AG04449 (cell line): ENCODE measurements at regions of chr2 and their contacts with region 1.

Region 1: GRCh38 chr2:55168221-55169154 is 63.6 kb downstream of the CLHC1 start:
- DNase-seq: no peak
- H3K4me3 ChIP-seq: no peak overlapping the region
- CTCF ChIP-seq: peak; percentile 69

Region 2: DNA sequence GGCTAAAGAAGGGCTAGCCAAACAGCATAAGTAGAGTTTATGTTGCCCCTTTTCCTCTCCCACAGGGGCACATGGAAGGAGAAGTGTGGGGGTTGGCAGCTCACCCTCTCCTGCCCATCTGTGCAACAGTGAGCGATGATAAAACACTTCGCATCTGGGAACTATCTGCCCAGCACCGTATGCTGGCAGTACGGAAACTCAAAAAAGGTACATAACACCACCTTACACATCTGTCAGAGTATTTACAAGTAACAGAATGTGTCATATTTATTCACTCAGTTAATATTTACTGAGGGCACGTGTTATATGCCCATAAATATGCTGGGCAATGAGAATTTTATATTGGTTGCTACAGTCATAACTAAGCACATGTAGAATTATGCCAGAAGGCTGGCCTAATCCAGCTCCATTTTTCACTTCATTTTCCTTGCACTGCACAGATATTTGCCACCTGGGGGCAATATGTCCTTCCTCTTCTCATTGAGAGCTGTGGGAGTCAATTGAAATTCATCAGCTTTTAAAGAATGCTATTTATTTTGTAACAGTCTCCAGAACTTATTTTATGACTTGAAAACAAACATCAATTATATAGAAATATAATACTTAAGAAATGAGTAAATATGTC is 268.8 kb before region 1 on chr2:
- CTCF ChIA-PET with region 1: interaction called, 304 read pairs
- POLR2A ChIA-PET with region 1: no interaction called
- DNase-seq: no peak
- H3K4me3 ChIP-seq: no peak overlapping the region
- CTCF ChIP-seq: peak; percentile 52

Region 3: DNA sequence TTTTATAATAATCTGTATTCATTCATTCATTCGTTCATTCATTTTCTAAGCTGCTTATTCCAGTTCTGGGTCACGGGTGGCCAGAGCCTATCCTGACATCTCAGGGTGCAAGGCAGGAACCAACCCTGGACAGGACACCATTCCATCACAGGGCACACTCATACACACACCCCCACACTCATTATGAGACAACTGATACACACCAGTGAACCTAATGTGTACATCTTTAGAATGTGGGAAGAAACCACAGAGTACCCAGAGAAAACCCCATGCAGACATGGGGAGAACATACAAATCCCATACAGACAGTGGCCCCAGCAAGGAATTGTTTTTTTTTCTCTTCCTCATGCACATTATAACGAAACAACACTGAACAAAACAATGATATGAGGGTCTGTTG is 172.9 kb before region 1 on chr2:
- CTCF ChIA-PET with region 1: interaction called, 12 read pairs
- POLR2A ChIA-PET with region 1: no interaction called
- DNase-seq: no peak
- H3K4me3 ChIP-seq: no peak overlapping the region
- CTCF ChIP-seq: no peak

Region 4: GRCh38 chr2:55010149-55010591 is 158.3 kb before region 1 on chr2:
- CTCF ChIA-PET with region 1: interaction called, 109 read pairs
- POLR2A ChIA-PET with region 1: no interaction called
- DNase-seq: no peak
- H3K4me3 ChIP-seq: peak overlapping the region; percentile 34; the same call in 1 of the 2 replicates
- CTCF ChIP-seq: no peak

Region 5: GRCh38 chr2:55050133-55050994 is 118.1 kb before region 1 on chr2 and contains the start of gene RTN4:
- CTCF ChIA-PET with region 1: interaction called, 115 read pairs
- POLR2A ChIA-PET with region 1: interaction called, 84 read pairs
- DNase-seq: peak; percentile 95
- H3K4me3 ChIP-seq: peak within 1 kb of the TSS; percentile 92
- CTCF ChIP-seq: peak; percentile 25

Region 6: DNA sequence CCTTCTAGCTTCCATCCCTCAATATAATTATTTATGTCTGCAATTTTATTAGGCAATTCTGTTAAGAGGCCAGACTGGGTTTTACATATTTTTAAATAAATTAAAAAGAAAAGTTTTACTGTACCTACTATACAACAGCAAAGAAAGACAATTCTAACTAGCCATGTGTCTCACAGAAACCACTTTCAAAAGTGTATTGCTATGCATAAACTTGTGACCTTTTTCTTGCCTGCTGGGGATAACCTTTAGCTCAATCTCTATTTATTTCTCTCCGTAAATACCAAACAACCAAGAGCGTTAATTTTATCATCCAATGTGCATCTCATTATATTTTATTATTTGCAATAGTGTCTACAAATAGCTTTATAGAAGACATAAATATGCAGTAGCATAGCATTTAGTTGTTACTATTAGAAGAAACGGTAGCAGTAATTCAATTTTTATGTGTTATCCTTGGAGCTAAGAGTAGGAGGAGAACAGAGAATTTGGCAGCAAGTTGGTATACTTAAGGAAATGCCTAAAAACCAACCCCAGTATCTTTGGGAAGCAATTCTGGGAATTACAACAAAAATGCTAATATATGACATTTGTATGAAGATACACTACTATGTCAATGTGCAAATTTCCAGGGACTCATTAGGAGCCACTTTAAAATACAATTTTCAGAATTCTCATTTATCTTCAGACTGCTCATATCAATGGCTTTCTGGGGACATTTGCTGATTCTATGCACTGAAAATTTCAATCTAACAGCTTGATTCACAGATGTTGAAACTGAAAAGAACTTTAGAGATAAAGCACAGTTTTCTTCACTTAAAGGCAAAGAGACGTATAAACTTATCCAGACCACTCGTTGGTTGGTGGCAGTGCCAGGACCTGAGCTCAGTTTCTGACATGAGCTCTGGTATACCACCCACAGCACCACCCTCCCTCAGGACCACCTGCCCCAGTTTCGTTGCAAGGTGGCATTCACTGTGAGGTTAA is 95.2 kb before region 1 on chr2:
- CTCF ChIA-PET with region 1: interaction called, 15 read pairs
- POLR2A ChIA-PET with region 1: no interaction called
- DNase-seq: no peak
- H3K4me3 ChIP-seq: no peak overlapping the region
- CTCF ChIP-seq: no peak